ENCODE measurements at regions of chr15 and their contacts with region 1.

Region 1: DNA sequence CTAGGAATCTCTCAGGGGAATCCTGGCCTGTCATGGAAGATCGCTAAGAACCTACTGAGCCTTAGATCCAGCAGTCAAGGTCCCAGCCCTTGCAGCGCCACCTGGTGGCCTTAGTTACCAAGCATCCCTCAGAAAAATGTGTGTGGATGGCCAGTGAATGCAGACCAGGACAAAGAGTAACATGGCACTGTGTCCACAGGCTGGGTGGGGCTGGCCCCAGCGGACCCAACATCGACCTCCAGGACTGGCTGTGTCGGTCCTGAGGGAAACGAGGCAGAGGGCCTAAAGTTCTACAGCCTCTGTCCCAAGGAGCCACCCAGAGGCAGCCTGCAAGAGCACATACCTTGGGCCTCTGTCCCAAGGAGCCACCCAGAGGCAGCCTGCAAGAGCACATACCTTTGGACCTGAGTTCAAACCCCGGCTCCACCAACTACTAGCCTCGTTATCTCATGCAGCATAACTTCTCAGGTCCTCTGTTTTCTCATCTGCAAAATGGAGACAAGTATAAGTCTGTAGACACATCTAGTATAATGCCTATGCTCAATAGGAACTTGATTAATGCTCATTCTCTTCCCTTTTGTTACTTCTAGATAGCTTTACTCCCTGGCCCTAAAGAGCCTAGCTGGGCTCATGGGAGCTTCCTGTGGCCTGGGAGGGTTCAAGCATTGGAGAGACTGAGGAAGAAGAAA is 57.5 kb upstream of the HERC1 start:
- DNase-seq: peak; percentile 74
- ATAC-seq: peak; percentile 71
- H3K4me3 Mint-ChIP-seq: no peak overlapping the region
- H3K27ac Mint-ChIP-seq: no peak overlapping the region
- H3K4me1 Mint-ChIP-seq: peaks cover 35% of the 10 kb centered on the region
- H3K27me3 Mint-ChIP-seq: no peaks in the 10 kb centered on the region
- CTCF ChIP-seq: peak; percentile 53

Region 2: DNA sequence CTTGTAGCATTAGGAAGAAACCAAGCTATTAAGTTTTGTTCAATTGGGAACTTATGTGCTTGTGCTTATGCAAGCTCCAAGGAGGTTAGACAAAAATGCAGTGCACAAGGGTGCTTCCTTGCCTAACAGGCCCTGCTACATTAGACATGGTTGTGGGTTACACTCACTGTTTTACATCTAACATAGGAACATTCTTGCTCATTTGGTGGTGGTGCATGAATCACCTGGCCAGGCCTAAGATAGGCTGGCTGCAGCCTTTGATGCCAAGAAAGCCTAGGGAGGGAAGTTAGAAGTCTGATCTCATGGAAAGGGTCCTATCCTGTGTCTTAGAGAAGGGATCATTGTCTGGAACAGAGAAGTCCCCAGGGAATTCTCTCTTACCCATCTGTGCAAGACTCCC is 553.1 kb before region 1 on chr15:
- CTCF ChIA-PET with region 1: no interaction called
- POLR2A ChIA-PET with region 1: no interaction called
- intact Hi-C with region 1: no loop called
- DNase-seq: no peak
- ATAC-seq: no peak
- H3K4me3 Mint-ChIP-seq: no peak overlapping the region
- H3K27ac Mint-ChIP-seq: no peak overlapping the region
- H3K4me1 Mint-ChIP-seq: peaks cover 11% of the 10 kb centered on the region
- H3K27me3 Mint-ChIP-seq: no peaks in the 10 kb centered on the region
- CTCF ChIP-seq: no peak

Region 3: DNA sequence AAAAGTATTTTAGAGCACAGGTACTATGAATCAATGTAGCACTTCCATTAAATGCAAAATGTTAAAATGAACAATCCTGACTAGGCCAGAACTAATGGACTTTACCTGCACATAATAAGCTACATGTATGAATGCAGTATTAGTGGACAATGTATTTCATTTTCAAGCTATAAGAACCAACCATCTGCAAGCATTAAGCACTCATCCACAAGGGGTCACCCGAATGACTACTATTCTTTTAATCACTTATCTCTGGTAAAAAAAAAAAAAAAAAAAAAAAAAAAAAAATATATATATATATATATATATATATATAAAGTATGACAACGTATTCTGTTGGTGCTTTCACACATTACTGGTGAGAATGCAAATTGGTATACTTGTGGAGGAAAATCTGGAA is 64.7 kb before region 1 on chr15:
- CTCF ChIA-PET with region 1: interaction called, 19 read pairs
- POLR2A ChIA-PET with region 1: interaction called, 3 read pairs
- intact Hi-C with region 1: loop called (anchors 1 kb)
- DNase-seq: no peak
- ATAC-seq: peak; percentile 49
- H3K4me3 Mint-ChIP-seq: no peak overlapping the region
- H3K27ac Mint-ChIP-seq: no peak overlapping the region
- H3K4me1 Mint-ChIP-seq: peaks cover 63% of the 10 kb centered on the region
- H3K27me3 Mint-ChIP-seq: no peaks in the 10 kb centered on the region
- CTCF ChIP-seq: no peak

Region 4: DNA sequence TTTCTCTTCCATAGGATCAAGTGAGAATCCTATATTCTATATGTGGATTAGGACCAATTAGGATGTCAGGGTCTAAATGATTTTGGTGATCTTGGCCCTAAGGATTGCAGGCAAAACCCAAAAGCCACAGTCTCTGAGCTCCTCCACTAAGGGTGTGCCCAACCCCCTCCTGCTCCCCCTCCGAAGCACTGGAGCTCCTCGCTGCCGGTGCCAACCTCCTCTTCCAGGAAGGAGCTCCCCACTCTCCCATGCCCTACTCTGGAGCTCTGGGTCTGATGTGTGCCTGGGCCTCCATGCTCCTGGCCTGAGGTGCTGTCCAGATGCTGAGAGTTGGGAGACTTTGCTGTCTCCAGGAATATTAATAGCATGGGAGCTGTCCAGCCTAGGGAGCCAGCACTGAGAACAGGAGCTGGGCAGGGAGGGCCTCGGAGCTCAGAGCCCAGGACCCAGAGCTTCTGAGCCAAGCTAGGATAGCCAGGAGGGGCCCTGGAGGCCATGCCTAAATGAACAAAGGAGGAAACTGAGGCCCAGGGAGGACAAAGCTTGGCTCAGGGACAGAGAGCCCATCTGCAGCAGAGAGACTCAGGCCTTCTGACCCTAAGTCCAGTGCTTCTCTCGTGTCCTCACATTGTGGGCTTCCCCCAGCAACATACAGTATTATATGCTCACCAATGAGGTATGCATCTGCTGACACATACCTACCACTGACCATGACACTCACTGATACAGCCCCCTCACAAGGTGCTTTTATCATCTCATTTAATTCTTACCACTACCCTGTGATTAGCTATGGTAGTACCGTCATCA is 20.6 kb before region 1 on chr15:
- CTCF ChIA-PET with region 1: interaction called, 6 read pairs
- POLR2A ChIA-PET with region 1: interaction called, 4 read pairs
- intact Hi-C with region 1: loop called (anchors 1 kb)
- DNase-seq: no peak
- ATAC-seq: no peak
- H3K4me3 Mint-ChIP-seq: no peak overlapping the region
- H3K27ac Mint-ChIP-seq: peak overlapping the region; percentile 84
- H3K4me1 Mint-ChIP-seq: peaks cover 27% of the 10 kb centered on the region
- H3K27me3 Mint-ChIP-seq: no peaks in the 10 kb centered on the region
- CTCF ChIP-seq: no peak

Region 5: GRCh38 chr15:63922261-63922904 is 31.2 kb after region 1 on chr15:
- CTCF ChIA-PET with region 1: no interaction called
- POLR2A ChIA-PET with region 1: no interaction called
- intact Hi-C with region 1: no loop called
- DNase-seq: no peak
- ATAC-seq: no peak
- H3K4me3 Mint-ChIP-seq: no peak overlapping the region
- H3K27ac Mint-ChIP-seq: no peak overlapping the region
- H3K4me1 Mint-ChIP-seq: peaks cover 5% of the 10 kb centered on the region
- H3K27me3 Mint-ChIP-seq: no peaks in the 10 kb centered on the region
- CTCF ChIP-seq: no peak

Region 6: DNA sequence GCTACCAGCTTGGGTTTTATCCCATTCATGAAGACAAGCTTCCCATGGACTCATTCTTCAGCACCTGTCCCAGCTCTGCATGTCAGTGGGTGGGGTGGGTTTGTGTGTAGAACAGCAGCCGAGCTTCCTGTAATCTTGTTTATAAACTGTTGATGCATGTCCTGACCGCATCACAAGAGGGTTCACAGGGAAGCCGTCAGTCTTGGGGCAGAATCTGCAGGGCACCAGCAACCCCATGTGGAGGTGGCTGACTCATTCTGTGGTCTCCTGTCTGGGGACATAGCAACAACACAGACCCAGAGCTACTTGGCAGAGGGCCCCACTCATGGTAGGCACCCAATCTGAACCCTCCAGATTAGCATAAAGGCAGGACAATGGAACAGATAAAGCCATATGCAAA is 119.5 kb after region 1 on chr15:
- CTCF ChIA-PET with region 1: interaction called, 14 read pairs
- POLR2A ChIA-PET with region 1: interaction called, 5 read pairs
- intact Hi-C with region 1: loop called (anchors 1 kb)
- DNase-seq: peak; percentile 61
- ATAC-seq: peak; percentile 97
- H3K4me3 Mint-ChIP-seq: peak overlapping the region; percentile 69
- H3K27ac Mint-ChIP-seq: peak overlapping the region; percentile 89
- H3K4me1 Mint-ChIP-seq: peaks cover 32% of the 10 kb centered on the region
- H3K27me3 Mint-ChIP-seq: no peaks in the 10 kb centered on the region
- CTCF ChIP-seq: no peak

Region 7: DNA sequence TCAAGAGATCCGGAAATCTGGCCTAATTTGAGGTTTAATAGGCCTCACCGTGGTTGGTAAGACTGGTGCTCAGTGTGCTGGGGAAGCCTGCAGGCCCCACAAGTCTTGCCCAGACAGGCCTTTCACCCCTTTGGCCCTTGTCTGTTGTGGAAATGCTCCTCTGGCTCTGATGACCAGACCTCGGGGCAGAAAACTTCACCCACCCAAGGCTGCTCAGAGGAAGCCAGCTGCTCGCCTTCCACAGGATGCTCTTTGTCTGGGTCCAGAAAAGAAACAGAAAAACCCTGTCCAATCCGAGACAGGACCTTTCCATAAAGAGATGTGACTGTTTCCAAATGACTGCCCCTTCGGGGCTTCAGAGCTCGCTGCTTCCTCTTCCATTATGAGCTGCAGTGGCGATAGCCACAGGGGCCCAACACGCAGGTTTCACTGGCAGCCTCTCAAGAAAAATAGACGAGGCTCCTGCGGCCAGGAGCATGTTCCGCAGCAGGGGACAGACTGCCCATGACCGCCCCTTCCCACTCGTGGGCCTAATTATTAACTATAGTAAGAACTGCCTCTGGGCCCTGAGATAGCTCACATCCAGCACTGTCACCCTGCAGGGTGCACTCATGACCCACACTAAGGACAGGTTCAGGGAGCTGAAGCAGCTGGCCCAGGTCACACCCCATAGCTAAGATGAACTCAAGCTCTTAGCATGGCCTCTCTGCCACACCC is 253.5 kb after region 1 on chr15:
- CTCF ChIA-PET with region 1: no interaction called
- POLR2A ChIA-PET with region 1: no interaction called
- intact Hi-C with region 1: loop called (anchors 2 kb)
- DNase-seq: no peak
- ATAC-seq: peak; percentile 87
- H3K4me3 Mint-ChIP-seq: peak overlapping the region; percentile 33
- H3K27ac Mint-ChIP-seq: peak overlapping the region; percentile 92
- H3K4me1 Mint-ChIP-seq: peaks cover 32% of the 10 kb centered on the region
- H3K27me3 Mint-ChIP-seq: no peaks in the 10 kb centered on the region
- CTCF ChIP-seq: no peak

Region 8: DNA sequence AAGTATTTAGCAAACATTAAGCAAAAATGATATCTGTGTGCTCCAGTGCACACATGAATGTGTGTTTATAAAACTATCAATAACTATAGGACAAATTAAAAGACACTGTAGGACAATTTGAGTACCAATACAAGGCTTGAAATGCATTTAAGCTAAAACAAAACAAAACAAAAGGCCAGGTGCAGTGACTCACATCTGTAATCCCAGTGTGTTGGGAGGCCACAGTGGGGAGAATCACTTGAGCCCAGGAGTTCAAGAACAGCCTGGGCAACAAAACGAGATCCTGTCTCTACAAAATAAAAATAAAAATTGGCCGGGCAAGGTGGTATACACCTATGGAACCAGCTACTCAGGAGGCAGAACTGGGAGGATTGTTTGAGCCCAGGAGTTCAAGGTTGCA is 414.0 kb after region 1 on chr15:
- CTCF ChIA-PET with region 1: no interaction called
- POLR2A ChIA-PET with region 1: no interaction called
- intact Hi-C with region 1: no loop called
- DNase-seq: no peak
- ATAC-seq: no peak
- H3K4me3 Mint-ChIP-seq: no peak overlapping the region
- H3K27ac Mint-ChIP-seq: peak overlapping the region; percentile 35
- H3K4me1 Mint-ChIP-seq: no peaks in the 10 kb centered on the region
- H3K27me3 Mint-ChIP-seq: no peaks in the 10 kb centered on the region
- CTCF ChIP-seq: no peak

Region 9: DNA sequence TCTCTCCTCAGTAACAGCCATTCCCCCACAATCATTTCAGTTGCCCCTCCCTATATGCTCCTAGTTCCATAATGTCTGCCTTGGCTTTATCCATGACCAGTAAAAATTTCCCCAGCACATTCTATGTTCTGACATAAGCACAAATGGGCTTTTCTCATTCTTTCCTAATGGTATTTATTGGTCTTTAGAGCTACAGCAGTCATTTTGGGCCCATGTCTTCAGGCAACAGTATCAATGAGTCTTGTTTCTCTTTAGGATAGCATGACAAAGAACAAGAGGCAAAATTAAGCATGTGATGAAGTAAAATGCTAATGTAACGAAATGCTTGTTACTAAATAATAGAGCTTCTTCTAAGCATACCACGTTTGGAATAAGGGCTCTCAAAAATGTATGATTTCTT is 1618.1 kb after region 1 on chr15:
- CTCF ChIA-PET with region 1: no interaction called
- POLR2A ChIA-PET with region 1: no interaction called
- intact Hi-C with region 1: no loop called
- DNase-seq: no peak
- ATAC-seq: no peak
- H3K4me3 Mint-ChIP-seq: no peak overlapping the region
- H3K27ac Mint-ChIP-seq: no peak overlapping the region
- H3K4me1 Mint-ChIP-seq: peaks cover 14% of the 10 kb centered on the region
- H3K27me3 Mint-ChIP-seq: no peaks in the 10 kb centered on the region
- CTCF ChIP-seq: no peak